ENCODE measurements at regions of chr11 and their contacts with region 1.

Region 1: DNA sequence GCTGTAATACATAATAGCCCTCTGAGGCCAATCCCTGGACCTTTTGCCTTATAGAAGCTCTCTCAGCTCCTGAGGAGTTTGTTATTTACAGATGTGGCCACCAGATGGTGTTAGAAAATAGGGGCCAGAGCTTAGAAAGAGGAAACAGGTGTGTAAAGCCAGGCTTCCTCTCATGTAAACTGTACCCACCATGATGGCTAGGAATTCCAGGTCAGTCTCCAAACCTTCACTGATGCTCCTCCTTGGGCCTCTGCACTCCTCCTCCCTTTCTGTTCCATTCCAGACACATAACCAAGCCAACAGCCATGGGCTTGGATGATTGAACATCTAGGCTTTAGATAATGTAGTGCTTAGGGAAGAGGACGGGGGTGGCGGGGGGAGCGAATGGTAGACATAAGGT is 39.7 kb downstream of the USP35 start:
- DNase-seq: peak; percentile 80
- H3K4me3 ChIP-seq: no peak overlapping the region
- H3K27ac ChIP-seq: no peak overlapping the region
- H3K4me1 ChIP-seq: peaks cover 33% of the 10 kb centered on the region
- CTCF ChIP-seq: peak; percentile 84

Region 2: GRCh38 chr11:77687085-77687484 is 541.4 kb before region 1 on chr11:
- CTCF ChIA-PET with region 1: no interaction called
- POLR2A ChIA-PET with region 1: no interaction called
- intact Hi-C with region 1: no loop called
- DNase-seq: no peak
- H3K4me3 ChIP-seq: no peak overlapping the region
- H3K27ac ChIP-seq: no peak overlapping the region
- H3K4me1 ChIP-seq: no peaks in the 10 kb centered on the region
- CTCF ChIP-seq: no peak

Region 3: DNA sequence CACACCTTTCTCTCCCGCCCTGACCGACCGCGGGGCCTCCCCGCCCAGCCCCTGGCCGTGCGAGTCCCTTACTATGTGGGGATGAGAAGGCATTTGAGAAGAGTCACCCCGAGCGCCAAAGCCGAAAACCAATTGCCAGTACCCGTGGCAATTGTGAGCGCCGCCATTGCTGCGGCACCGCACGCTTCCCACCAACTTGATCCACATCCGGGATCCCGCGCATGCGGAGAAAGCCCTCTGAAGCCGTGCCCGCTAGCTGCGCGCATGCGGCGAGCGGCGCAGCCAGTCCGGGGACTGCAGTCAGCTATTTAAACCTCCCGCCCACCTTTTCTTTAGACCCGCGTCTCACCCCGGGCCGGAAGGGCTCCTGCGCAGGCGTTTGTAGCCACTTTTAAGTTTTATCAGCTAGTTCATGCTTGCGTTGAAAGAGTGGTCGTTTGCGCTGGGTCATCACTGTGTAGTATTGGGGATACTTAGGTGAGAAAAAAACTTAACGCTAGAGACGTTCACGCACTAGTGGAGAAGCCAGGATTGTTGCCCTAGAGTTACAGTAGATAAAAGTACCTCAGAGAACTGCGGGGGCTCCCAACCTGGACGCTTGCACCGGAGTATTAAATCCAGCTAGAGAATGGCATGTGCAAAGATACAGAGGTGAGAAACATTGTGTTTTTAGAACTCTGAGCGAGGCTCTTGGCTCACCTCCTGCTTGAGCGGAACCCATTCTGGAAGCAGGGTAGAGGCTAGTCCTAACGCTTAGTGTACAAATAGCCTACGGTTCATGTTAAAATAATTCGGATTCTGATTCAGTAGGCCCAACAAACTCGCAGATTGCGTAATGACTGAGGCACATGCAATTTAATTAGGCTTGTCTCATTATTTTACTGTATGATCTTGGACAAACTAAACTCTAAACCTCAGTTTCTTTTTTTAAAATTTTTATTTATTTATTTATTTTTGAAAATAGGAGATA is 88.8 kb before region 1 on chr11 and contains the start of gene ALG8:
- CTCF ChIA-PET with region 1: no interaction called
- POLR2A ChIA-PET with region 1: no interaction called
- intact Hi-C with region 1: no loop called
- DNase-seq: peak; percentile 96
- H3K4me3 ChIP-seq: peak within 1 kb of the TSS; percentile 82
- H3K27ac ChIP-seq: peak within 1 kb of the TSS; percentile 75
- H3K4me1 ChIP-seq: peaks cover 46% of the 10 kb centered on the region
- CTCF ChIP-seq: no peak
- total RNA-seq, gene ALG8: 42.5 and 43.7 TPM in 2 replicates

Region 4: GRCh38 chr11:78156105-78156830 is 72.2 kb before region 1 on chr11:
- CTCF ChIA-PET with region 1: no interaction called
- POLR2A ChIA-PET with region 1: no interaction called
- intact Hi-C with region 1: no loop called
- DNase-seq: no peak
- H3K4me3 ChIP-seq: no peak overlapping the region
- H3K27ac ChIP-seq: no peak overlapping the region
- H3K4me1 ChIP-seq: no peaks in the 10 kb centered on the region
- CTCF ChIP-seq: no peak

Region 5: DNA sequence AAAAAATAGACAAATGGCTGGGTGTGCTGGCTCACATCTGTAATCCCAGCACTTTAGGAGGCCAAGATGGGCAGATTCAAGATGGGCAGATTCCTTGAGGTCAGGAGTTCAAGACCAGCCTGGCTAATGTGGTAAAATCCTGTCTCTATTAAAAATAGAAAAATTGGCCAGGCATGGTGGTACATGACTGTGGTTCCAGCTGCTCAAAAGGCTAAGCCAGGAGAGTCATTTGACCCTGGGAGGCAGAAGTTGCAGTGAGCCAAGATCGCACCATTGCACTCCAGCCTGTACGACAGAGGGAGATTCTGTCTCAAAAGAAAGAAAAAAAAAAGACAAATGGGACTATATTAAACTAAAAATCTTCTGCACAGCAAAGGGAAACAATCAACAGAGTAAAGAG is 15.6 kb after region 1 on chr11:
- CTCF ChIA-PET with region 1: no interaction called
- POLR2A ChIA-PET with region 1: no interaction called
- intact Hi-C with region 1: no loop called
- DNase-seq: no peak
- H3K4me3 ChIP-seq: no peak overlapping the region
- H3K27ac ChIP-seq: no peak overlapping the region
- H3K4me1 ChIP-seq: no peaks in the 10 kb centered on the region
- CTCF ChIP-seq: no peak

Region 6: DNA sequence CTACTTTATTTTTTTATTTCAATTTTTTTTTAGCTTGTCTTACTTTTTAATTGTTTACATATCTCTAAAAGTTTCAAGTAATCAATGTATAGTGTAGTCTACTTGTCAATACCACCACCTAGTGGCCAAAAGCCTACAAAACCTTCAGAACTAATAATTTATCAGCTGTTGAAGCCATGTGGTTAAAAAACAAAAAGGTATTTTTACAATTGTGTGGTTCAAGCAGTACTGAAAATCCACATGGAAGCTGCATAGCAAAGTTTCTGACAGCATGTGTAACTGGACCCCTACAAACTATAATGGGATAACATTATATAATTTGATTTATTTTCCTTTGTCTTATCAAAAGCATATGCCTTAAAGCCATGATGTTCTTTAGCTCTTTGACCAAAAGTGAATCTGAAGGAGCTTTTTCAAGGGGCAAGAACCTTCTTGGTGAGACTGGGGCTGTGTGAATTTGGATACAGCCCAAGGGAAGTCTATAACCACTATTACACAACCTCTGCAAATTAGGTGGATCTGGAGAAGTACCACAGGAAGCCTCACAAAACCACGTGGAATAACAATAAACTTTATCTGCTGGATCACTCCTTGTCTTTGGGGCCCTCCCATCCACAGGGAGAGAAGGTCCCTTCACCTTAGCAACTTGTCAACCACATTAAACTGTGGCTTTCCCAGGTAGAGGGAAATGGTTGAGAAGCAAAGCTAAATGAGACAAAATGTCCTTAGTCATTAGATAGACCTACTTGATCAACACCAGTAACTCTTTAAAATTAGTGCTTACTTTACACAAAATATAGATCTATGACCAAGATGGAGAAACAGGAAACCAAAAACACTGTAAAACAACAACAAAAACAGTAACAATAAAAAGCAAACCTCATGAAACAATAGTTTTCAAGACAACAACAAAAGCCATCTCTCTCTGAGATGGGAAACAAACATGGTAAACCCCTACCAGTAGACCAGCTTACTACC is 336.3 kb after region 1 on chr11:
- CTCF ChIA-PET with region 1: interaction called, 3 read pairs
- POLR2A ChIA-PET with region 1: no interaction called
- intact Hi-C with region 1: loop called (anchors 2 kb)
- DNase-seq: peak; percentile 73
- H3K4me3 ChIP-seq: no peak overlapping the region
- H3K27ac ChIP-seq: no peak overlapping the region
- H3K4me1 ChIP-seq: peaks cover 25% of the 10 kb centered on the region
- CTCF ChIP-seq: peak; percentile 86

Region 7: DNA sequence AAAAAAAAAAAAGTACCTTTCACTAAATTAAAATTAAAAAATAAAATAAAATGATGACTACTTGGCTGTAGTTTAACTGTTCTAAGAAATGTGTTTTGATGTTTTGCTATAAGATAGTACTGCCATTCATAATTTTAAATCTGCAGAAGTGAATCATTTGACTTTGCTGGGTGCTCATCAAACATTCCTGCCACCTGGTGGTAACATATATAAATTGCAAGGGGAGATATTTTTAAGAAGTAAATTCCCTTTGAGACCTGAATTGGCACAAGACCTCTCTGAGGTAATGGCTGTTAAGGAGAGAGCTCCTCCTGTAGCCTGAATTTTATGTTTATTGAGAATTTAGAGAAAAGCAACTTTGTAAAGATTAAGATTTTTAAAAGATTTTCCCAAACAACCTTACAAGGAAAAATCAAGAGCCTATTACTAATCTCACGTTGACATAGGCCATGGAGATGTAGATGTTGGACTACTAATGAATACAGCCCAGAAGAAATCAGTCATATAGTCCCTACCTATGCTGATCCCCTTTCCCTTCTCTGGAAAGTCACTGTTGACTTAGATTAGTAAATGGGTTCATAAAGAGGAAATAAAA is 358.1 kb after region 1 on chr11:
- CTCF ChIA-PET with region 1: no interaction called
- POLR2A ChIA-PET with region 1: no interaction called
- intact Hi-C with region 1: loop called (anchors 2 kb)
- DNase-seq: peak; percentile 49
- H3K4me3 ChIP-seq: no peak overlapping the region
- H3K27ac ChIP-seq: no peak overlapping the region
- H3K4me1 ChIP-seq: no peaks in the 10 kb centered on the region
- CTCF ChIP-seq: peak; percentile 84

Measured in OCI-LY7 (cell line).